PC-9 (cell line): ENCODE measurements at regions of chr9 and their contacts with region 1.

Region 1: DNA sequence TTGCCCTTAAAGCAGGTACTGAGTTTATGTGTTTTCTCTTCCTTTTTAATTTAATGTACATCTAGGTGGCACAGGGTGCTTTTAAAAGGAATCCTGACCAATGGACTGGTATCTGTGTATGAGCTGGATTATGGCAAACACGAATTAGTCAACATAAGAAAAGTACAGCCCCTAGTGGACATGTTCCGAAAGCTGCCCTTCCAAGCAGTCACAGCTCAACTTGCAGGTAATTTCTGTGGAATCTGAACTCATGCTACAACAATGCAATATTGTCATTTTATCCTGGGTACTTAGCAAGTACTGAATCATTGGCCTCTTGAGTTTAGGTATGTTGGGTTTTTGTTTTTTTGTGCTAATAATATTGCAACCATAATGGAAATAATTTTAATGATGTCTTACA is 14.4 kb upstream of the TMOD1 start:
- DNase-seq: peak in 1 of 2 experiments; percentile 51
- H3K4me3 ChIP-seq: no peak overlapping the region
- H3K27ac ChIP-seq: no peak overlapping the region
- H3K4me1 ChIP-seq: no peaks in the 10 kb centered on the region
- H3K27me3 ChIP-seq: no peaks in the 10 kb centered on the region
- CTCF ChIP-seq: peak; percentile 53

Region 2: DNA sequence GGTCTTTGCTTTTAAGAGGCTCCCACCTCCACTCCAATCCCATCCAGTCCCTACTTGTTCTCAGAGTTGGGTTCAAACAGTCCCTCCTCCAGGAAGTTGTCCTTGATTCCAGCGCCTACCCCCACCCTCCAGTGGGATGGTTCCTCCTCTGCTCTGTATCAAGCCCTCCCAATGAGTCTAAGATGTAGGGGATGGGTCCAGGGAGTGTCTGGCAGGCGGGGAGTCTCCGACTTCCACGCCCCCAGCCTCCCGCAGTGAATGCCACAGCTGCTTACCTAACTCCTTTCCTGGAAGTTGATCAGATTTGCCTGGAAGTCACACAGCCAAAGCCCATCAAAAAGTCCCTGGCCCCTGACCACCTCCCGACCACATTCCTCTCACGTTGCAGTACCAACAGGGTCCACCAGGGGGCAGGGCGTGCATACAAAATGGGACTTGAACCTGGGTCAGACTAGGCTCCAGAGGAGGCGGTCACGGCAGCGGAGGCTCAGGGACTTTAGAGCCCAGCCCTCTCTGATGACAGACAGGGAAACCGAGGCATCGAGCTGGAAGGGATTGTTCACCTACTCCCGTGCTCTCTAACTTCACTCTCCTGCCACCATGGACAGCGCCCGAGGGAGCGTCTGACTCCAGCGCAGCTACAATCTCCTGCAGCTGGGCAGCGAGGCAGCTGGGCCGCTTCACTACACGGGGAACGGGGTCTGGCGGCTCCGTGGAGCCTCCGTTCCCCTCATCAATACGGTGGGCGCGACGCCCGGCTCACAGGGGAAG is 100.2 kb before region 1 on chr9:
- CTCF ChIA-PET with region 1: interaction called, 10 read pairs
- POLR2A ChIA-PET with region 1: no interaction called
- intact Hi-C with region 1: no loop called
- DNase-seq: peak in 1 of 2 experiments; percentile 71
- H3K4me3 ChIP-seq: no peak overlapping the region
- H3K27ac ChIP-seq: no peak overlapping the region
- H3K4me1 ChIP-seq: no peaks in the 10 kb centered on the region
- H3K27me3 ChIP-seq: no peaks in the 10 kb centered on the region
- CTCF ChIP-seq: peak; percentile 99

Region 3: DNA sequence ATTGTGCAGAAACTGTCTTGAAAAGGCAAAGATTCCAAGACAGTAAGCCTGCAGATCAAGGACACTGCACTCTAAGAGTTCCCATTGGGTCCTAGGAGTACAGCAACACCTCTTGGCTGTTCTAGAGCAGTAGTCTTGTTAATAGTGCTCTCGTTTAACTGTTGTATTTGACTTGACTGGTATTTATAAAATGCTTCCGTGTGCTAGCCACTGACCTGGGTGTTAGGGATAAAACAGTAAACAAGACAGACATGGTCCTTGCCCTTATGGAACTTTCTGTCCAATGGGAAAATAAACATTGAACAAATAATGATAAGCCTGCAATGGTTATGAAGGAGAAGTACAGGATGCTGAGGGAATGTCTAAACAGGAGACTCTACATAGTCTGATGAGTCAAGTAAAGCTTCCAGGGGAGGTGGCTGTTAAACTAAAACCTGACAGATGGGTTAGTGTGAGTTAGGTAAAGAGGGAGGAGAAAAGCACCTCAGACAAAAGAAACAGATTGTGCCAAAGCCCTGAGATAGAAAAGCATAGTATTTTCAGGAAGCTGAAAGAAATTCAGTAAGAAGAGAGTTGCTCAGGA is 41.9 kb before region 1 on chr9:
- CTCF ChIA-PET with region 1: no interaction called
- POLR2A ChIA-PET with region 1: no interaction called
- intact Hi-C with region 1: no loop called
- DNase-seq: no peak
- H3K4me3 ChIP-seq: no peak overlapping the region
- H3K27ac ChIP-seq: no peak overlapping the region
- H3K4me1 ChIP-seq: peaks cover 13% of the 10 kb centered on the region
- H3K27me3 ChIP-seq: no peaks in the 10 kb centered on the region
- CTCF ChIP-seq: no peak